Activated CD8-positive, alpha-beta T cell treated with anti-CD3 and anti-CD28 coated beads for 36 hours (primary cell): ENCODE measurements at regions of chr6 and their contacts with region 1.

Region 1: DNA sequence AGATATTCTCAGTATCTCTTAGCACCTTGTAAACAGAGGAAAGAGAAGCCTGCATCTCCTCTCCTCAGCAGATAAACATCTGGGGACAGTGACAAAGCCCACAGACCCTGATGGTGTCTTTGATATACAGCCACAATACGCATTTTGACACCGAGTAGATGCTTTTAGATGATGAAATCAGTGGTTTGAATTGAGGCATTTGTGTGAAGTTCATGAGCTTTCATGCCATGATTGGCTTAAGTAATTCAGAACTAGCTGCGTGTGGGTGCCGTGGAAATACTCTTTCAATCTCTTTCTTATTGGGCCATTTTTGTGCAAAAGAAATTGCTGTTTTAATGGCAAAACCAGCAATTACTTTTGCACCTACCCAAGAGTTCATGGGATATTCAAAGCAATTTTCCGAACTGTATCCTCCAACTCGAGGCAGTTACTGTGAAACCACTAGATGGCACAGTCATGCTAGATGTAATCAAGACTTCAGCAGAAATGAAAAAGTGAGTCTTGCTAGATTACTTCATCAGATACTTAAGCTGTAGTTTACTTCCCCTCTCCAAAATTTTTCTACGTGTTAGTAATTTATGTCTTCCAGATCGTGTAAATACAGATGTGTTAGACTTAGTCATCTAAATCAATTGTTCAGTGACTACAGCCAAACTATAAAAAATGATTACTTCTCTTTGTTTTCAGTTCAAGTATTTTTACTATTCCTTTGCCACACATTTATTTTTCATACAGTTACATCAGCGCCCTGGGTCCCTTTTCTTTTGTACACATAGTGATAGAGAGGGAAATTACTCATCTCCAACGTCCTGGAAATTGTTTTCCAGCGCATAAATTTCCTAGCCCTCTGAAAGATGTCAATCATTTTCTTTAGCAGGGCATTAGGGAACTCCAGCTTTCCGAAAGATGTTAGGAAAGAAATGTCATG is 49.4 kb downstream of the IYD start:
- DNase-seq: peak; percentile 49
- ATAC-seq: peak; percentile 80
- H3K4me3 Mint-ChIP-seq: peak overlapping the region; percentile 67
- H3K27ac Mint-ChIP-seq: peak overlapping the region; percentile 87
- H3K4me1 Mint-ChIP-seq: peaks cover 30% of the 10 kb centered on the region
- H3K27me3 Mint-ChIP-seq: peaks cover 12% of the 10 kb centered on the region
- CTCF ChIP-seq: peak; percentile 65

Region 2: DNA sequence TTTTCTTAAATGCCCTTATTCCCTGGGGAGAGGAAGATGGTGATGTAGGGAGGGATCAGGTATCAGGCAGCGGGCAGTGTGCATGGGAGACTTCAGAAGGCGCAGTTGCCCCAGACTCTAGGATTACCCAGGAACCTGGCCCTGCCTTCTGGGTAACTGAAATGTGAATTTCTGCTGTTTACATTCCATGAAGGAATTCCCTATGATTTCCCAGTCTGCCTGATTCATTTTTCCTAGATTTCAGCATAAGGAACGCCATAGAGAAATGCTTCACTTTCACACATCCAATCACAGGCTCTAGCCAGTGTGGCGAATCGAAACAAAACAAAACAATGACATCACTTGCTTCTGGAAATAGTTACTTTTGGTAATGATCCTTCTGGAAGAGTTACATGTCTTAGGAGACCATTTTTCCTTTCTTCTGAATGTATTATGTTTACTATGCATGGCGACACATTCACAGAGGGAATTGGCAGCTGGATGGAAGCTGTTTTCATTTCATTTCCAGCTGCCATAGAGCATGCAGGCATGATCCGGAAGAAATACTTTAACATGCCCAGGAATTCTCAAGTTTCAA is 587.3 kb before region 1 on chr6:
- CTCF ChIA-PET with region 1: no interaction called
- POLR2A ChIA-PET with region 1: no interaction called
- intact Hi-C with region 1: no loop called
- DNase-seq: no peak
- ATAC-seq: no peak
- H3K4me3 Mint-ChIP-seq: no peak overlapping the region
- H3K27ac Mint-ChIP-seq: no peak overlapping the region
- H3K4me1 Mint-ChIP-seq: no peaks in the 10 kb centered on the region
- H3K27me3 Mint-ChIP-seq: no peaks in the 10 kb centered on the region
- CTCF ChIP-seq: no peak

Region 3: GRCh38 chr6:150250826-150251225 is 167.3 kb before region 1 on chr6:
- CTCF ChIA-PET with region 1: no interaction called
- POLR2A ChIA-PET with region 1: no interaction called
- intact Hi-C with region 1: no loop called
- DNase-seq: no peak
- ATAC-seq: no peak
- H3K4me3 Mint-ChIP-seq: no peak overlapping the region
- H3K27ac Mint-ChIP-seq: no peak overlapping the region
- H3K4me1 Mint-ChIP-seq: peaks cover 20% of the 10 kb centered on the region
- H3K27me3 Mint-ChIP-seq: peaks cover 15% of the 10 kb centered on the region
- CTCF ChIP-seq: no peak

Region 4: DNA sequence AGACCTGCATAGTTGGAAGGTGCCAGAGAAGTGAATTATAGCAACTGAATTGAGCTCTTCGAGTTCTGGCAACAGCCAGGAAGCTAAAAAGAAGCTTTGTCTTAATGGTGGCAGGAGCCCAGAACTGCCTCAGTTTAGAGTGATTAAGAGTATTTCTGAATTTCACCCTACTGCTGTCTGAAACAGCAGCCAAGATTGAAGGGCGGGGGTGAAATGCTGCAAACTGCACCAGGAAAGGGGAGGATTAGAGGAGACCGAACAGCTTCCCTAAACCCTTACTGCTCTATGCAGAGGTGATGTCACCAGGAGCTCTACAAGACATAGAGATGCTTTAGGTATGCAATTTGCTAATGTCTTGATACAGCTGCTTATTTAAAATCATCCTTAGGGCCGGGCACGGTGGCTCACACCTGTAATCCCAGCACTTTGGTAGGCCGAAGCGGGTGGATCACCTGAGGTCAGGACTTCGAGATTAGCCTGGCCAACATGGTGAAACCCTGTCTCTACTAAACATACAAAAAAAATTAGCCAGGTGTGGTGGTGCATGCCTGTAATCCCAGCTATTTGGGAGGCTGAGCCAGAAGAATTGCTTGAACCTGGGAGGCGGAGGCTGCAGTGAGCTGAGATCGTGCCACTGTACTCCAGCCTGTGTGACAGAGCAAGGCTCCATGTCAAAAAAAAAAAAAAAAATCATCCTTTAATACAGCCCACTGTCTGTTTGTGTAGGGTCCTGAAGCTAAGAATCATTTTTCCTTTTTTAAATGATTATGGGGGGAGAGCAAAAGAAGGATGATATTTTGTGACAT is 141.0 kb before region 1 on chr6:
- CTCF ChIA-PET with region 1: no interaction called
- POLR2A ChIA-PET with region 1: no interaction called
- intact Hi-C with region 1: no loop called
- DNase-seq: no peak
- ATAC-seq: no peak
- H3K4me3 Mint-ChIP-seq: no peak overlapping the region
- H3K27ac Mint-ChIP-seq: no peak overlapping the region
- H3K4me1 Mint-ChIP-seq: no peaks in the 10 kb centered on the region
- H3K27me3 Mint-ChIP-seq: peaks cover 18% of the 10 kb centered on the region
- CTCF ChIP-seq: no peak

Region 5: GRCh38 chr6:150443621-150444020 is 25.5 kb after region 1 on chr6:
- CTCF ChIA-PET with region 1: no interaction called
- POLR2A ChIA-PET with region 1: no interaction called
- intact Hi-C with region 1: no loop called
- DNase-seq: no peak
- ATAC-seq: no peak
- H3K4me3 Mint-ChIP-seq: no peak overlapping the region
- H3K27ac Mint-ChIP-seq: no peak overlapping the region
- H3K4me1 Mint-ChIP-seq: no peaks in the 10 kb centered on the region
- H3K27me3 Mint-ChIP-seq: peaks cover 14% of the 10 kb centered on the region
- CTCF ChIP-seq: no peak

Region 6: DNA sequence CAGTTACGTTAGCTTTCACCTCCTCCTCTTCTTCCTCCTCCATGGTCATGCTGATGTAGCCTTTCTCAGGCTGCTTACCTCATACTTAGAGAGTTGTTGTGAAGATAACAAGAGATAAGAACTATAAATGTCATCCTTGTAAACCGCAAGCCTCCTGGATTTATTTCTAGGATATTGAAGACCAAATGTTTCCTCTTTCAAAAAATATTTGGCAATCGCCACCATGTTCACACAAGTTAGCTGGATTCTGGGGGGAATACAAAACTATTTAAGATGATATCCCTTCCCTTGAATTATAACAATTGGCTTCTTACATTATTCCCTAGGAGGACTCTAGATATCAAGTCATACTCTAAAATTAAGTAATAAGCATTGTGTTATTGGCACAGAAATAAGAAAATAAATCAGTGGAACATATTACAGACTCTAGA is 81.7 kb after region 1 on chr6:
- CTCF ChIA-PET with region 1: no interaction called
- POLR2A ChIA-PET with region 1: no interaction called
- intact Hi-C with region 1: loop called (anchors 5 kb)
- DNase-seq: no peak
- ATAC-seq: no peak
- H3K4me3 Mint-ChIP-seq: no peak overlapping the region
- H3K27ac Mint-ChIP-seq: no peak overlapping the region
- H3K4me1 Mint-ChIP-seq: no peaks in the 10 kb centered on the region
- H3K27me3 Mint-ChIP-seq: peaks cover 8% of the 10 kb centered on the region
- CTCF ChIP-seq: no peak

Region 7: GRCh38 chr6:150685860-150686259 is 267.7 kb after region 1 on chr6:
- CTCF ChIA-PET with region 1: interaction called, 10 read pairs
- POLR2A ChIA-PET with region 1: no interaction called
- intact Hi-C with region 1: no loop called
- DNase-seq: peak; percentile 68
- ATAC-seq: peak; percentile 92
- H3K4me3 Mint-ChIP-seq: no peak overlapping the region
- H3K27ac Mint-ChIP-seq: no peak overlapping the region
- H3K4me1 Mint-ChIP-seq: no peaks in the 10 kb centered on the region
- H3K27me3 Mint-ChIP-seq: no peaks in the 10 kb centered on the region
- CTCF ChIP-seq: peak; percentile 78

Region 8: DNA sequence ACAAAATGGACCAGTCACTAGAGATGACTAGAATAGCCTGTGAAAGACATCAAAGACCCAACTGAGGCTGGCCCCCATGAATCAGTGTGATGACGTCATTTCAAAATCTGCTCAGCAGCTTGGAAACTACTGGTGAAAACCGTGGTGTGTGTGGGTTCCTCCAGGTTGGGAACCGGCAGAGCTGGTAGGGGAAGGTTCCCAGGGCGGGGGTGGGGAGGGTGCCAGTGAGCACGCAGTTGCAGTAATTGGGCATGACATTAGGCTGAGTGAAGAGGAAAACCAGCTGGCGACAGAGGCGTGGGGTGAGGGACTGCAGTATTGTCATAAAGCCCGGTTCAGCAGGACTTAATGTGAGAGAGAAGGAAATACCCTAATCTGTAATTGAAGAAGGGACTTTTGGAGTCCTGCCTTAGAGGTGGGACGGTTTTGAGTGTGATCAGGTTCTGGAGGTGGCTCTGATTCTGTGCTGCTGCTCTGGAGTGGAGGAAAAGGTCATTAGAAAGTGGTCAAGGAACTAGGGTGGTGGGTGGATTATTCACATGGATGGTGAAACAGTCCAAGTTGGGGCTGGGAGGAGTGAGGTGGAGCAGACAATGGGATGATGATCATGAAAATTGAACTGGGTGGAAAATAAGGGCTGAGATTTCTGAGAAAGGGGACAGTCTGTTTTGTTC is 395.3 kb after region 1 on chr6:
- CTCF ChIA-PET with region 1: interaction called, 105 read pairs
- POLR2A ChIA-PET with region 1: no interaction called
- intact Hi-C with region 1: loop called (anchors 1 kb)
- DNase-seq: peak; percentile 72
- ATAC-seq: peak; percentile 84
- H3K4me3 Mint-ChIP-seq: peak overlapping the region; percentile 8
- H3K27ac Mint-ChIP-seq: peak overlapping the region; percentile 90
- H3K4me1 Mint-ChIP-seq: peaks cover 25% of the 10 kb centered on the region
- H3K27me3 Mint-ChIP-seq: peaks cover 5% of the 10 kb centered on the region
- CTCF ChIP-seq: no peak